Activated CD4-positive, alpha-beta memory T cell treated with anti-CD3 and anti-CD28 coated beads for 36 hours (primary cell): ENCODE measurements at regions of chr19 and their contacts with region 1.

Region 1: DNA sequence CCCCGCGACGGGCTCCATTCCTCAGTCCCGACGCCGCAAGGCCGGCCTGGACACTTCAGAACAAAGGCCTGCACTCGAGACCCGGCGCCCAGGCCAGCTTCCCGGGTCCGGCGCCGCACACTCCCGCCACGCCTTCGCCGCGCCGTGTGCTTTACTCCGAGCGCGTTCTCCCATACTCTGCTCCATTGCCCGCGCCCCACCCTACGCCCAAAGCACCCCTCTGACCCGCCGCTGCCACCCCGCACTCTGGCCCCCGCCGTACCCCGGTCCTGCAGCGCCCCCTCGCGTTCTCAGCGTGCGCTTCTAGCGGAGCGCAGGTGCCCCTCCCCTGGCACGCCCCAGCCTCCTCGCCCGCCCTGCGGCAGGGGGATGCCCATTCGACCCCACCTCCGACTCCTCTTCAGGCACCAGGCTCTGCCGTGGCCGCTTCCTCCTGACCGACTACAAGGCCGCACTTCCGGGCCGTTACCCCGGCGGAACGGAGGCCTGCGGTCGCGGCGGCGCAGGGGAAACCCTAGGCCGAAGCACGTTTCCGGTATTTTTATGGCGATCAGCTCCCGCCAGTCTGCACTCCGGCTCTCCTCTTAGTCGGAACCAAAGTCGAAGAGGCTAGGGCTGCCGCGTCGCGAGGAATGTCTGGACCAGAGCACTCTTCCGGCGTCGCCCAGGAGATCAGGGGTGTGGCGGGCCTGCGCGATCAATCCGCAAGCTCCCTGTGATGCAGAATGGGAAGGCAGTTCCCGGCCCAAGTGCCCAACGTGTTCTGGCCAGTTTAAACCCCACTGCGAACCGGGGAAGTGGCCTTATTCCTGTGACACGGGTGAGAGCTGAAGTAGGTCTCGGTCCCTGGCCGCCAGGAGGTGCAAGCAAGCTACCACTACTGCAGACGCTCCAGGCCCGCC is at the start of gene ZBTB45:
- DNase-seq: peak; percentile 95
- H3K4me3 Mint-ChIP-seq: peak within 1 kb of the TSS; percentile 88
- H3K27ac Mint-ChIP-seq: peak within 1 kb of the TSS; percentile 88
- H3K4me1 Mint-ChIP-seq: peaks cover 32% of the 10 kb centered on the region
- H3K27me3 Mint-ChIP-seq: no peaks in the 10 kb centered on the region
- total RNA-seq, gene ZBTB45: 9.9 to 10.0 TPM

Region 2: DNA sequence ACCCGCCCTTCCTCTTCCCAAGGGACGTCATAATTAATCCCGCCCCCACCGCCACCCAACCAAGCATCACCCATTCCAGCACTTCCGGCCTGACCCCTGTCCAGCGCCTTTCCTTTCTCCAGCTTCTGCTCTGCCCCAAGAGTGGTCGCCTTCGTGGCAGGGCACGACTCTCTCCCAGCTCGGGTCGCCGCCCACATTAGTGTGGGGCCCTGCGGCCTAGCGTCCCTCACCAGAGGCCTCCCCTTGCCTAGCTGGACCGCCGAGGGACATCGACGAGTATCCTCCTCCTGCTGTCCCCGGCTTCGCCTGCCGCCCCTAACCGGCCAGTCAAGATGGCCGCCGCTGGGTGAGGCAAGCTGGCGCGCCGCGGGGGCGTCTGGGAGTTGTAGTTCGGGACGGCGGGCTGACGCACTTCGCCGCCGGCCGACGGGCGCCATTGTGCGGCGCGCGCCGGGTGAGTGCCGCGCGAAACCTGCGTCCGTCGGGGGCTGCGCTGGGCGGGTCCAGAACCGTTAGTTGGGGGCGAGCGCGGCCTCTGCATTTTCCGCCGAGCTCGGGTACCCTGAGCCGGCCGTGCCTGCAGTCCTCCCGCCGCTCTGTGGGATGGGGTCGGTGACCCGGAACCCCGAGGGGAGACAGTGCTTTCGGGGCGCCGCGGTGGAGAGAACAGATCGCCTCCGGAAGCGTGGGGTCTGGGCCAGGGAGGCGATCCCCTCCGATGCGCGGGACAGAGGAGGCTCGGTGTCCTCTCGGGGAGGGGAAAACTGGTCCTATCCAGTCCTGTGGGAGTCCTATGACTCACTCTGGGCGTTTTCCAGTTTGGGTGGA is 336.4 kb before region 1 on chr19 and contains the start of gene ZNF274:
- CTCF ChIA-PET with region 1: no interaction called
- POLR2A ChIA-PET with region 1: no interaction called
- intact Hi-C with region 1: loop called (anchors 2 kb)
- DNase-seq: peak; percentile 95
- H3K4me3 Mint-ChIP-seq: peak within 1 kb of the TSS; percentile 92
- H3K27ac Mint-ChIP-seq: peak within 1 kb of the TSS; percentile 99
- H3K4me1 Mint-ChIP-seq: peaks cover 16% of the 10 kb centered on the region
- H3K27me3 Mint-ChIP-seq: no peaks in the 10 kb centered on the region
- total RNA-seq, gene ZNF274: 19.1 to 19.6 TPM

Region 3: DNA sequence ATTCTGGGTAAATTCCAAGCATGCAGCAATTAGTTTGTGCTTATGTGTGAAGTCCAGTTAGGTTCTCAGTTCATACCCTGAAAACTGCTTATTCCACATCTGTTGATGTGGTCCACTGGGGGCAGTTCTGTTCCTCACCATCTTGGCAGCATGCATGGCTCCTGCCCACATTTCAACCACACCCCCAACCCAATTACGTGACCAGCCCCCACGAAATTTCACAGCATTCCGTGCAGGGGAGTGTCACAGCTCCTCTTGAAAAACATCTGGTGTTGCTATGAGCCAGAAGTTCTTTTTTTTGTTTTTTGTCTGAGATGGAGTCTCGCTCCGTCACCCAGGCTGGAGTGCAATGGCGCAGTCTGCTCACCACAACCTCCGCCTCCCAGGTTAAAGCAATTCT is 223.5 kb before region 1 on chr19:
- CTCF ChIA-PET with region 1: no interaction called
- POLR2A ChIA-PET with region 1: no interaction called
- intact Hi-C with region 1: no loop called
- DNase-seq: no peak
- H3K4me3 Mint-ChIP-seq: no peak overlapping the region
- H3K27ac Mint-ChIP-seq: no peak overlapping the region
- H3K4me1 Mint-ChIP-seq: no peaks in the 10 kb centered on the region
- H3K27me3 Mint-ChIP-seq: no peaks in the 10 kb centered on the region

Region 4: GRCh38 chr19:58326914-58327726 is 192.5 kb before region 1 on chr19 and contains the start of gene ZSCAN22:
- CTCF ChIA-PET with region 1: interaction called, 11 read pairs
- POLR2A ChIA-PET with region 1: no interaction called
- intact Hi-C with region 1: loop called (anchors 1 kb)
- DNase-seq: peak; percentile 95
- H3K4me3 Mint-ChIP-seq: no peak within 1 kb of the TSS
- H3K27ac Mint-ChIP-seq: no peak within 1 kb of the TSS
- H3K4me1 Mint-ChIP-seq: peaks cover 4% of the 10 kb centered on the region
- H3K27me3 Mint-ChIP-seq: no peaks in the 10 kb centered on the region
- total RNA-seq, gene ZSCAN22: 3.1 to 3.3 TPM

Region 5: DNA sequence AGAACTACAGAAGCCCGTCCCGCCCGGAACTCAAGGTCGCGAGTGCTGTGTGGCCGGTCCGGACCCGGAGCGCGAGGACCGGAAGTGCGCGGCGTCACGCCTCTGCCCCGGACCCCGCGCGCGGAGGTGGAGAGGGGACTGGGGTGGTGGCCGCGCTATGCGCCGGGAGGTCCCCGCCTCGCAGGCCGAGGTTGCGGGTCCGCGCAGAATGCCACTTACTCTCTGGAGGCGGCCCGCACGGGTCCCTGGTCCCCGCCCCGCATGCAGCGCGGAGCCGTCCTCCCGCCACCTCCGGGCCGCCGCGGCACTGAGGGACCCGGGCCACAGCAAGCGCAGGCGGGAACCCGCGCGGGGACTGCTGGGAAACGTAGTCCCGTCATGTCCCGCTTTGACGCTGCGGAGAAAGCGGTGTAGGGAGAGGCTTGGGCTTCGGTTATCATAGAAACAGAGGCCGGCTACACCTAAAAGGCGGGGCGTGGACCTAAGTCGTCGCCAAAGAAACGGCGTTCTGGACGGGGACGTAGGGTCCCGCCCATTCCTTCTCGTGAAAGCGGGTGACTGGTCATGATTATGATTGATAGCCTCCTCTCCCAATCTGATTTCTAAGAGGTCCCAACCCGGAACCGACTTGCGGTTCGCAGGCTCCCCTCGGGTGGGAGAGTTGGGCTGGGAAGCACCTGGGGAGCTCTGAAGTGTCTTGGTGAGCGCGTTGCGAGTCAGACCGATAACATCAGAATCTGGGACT is 138.7 kb before region 1 on chr19 and contains the start of gene ZNF837:
- CTCF ChIA-PET with region 1: interaction called, 4 read pairs
- POLR2A ChIA-PET with region 1: interaction called, 4 read pairs
- intact Hi-C with region 1: loop called (anchors 1 kb)
- DNase-seq: peak; percentile 99
- H3K4me3 Mint-ChIP-seq: peak within 1 kb of the TSS; percentile 84
- H3K27ac Mint-ChIP-seq: peak within 1 kb of the TSS; percentile 92
- H3K4me1 Mint-ChIP-seq: peaks cover 25% of the 10 kb centered on the region
- H3K27me3 Mint-ChIP-seq: no peaks in the 10 kb centered on the region
- total RNA-seq, gene ZNF837: 2.1 to 2.4 TPM

Region 6: DNA sequence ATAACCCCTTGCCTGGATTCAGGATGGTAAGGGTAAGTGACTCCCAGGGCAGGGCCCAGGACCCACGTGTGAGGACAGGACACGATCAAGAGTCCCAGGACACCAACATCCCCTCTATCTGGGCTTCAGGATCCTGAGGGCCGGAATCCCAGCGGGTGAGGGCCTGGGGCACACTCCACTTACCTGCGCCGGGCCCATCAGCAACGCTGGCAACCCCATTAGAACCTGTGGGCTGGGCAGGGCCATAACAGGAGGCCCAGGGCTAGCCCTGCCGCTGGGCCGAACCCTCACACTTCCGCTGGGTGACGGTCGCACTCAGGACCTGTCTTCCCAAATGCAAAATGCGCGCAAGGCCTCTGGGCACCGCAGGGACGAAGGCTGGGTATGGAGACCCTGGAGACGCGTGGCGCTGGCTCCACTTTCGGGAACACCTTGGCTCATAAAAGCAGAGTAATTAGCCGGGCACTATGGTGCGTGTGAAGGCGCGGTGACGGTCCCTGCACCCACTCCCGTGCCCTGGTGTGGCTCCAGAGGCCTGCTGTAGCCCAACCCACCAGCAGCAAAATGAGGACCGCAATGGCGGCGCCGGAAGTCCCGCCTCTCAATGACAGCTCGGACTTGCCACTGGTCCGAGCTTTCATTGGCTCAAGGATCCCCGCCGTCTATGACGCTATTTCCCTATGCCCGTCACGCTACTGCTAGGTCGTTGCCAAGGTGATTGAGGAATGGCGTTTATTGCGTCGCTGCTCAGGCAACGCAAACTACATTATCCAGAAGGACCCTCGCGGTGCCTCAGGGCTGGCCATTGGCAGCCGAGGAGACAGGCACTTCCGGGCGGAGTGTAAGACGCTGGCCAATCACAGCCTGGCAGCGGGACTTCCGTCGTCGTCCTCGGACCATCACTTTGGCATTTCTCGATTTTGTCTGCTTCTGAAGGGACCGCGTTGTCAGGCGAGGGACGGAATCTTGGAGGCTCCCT is 79.7 kb before region 1 on chr19 and contains the start of gene ZNF132:
- CTCF ChIA-PET with region 1: no interaction called
- POLR2A ChIA-PET with region 1: no interaction called
- intact Hi-C with region 1: no loop called
- DNase-seq: peak; percentile 97
- H3K4me3 Mint-ChIP-seq: peak within 1 kb of the TSS; percentile 84
- H3K27ac Mint-ChIP-seq: peak within 1 kb of the TSS; percentile 71
- H3K4me1 Mint-ChIP-seq: peaks cover 25% of the 10 kb centered on the region
- H3K27me3 Mint-ChIP-seq: no peaks in the 10 kb centered on the region
- total RNA-seq, gene ZNF132: 3.1 to 3.6 TPM

Region 7: GRCh38 chr19:58492265-58492664 is 27.3 kb before region 1 on chr19:
- CTCF ChIA-PET with region 1: interaction called, 9 read pairs
- POLR2A ChIA-PET with region 1: interaction called, 13 read pairs
- intact Hi-C with region 1: no loop called
- DNase-seq: no peak
- H3K4me3 Mint-ChIP-seq: no peak overlapping the region
- H3K27ac Mint-ChIP-seq: no peak overlapping the region
- H3K4me1 Mint-ChIP-seq: peaks cover 30% of the 10 kb centered on the region
- H3K27me3 Mint-ChIP-seq: no peaks in the 10 kb centered on the region

Region 8: DNA sequence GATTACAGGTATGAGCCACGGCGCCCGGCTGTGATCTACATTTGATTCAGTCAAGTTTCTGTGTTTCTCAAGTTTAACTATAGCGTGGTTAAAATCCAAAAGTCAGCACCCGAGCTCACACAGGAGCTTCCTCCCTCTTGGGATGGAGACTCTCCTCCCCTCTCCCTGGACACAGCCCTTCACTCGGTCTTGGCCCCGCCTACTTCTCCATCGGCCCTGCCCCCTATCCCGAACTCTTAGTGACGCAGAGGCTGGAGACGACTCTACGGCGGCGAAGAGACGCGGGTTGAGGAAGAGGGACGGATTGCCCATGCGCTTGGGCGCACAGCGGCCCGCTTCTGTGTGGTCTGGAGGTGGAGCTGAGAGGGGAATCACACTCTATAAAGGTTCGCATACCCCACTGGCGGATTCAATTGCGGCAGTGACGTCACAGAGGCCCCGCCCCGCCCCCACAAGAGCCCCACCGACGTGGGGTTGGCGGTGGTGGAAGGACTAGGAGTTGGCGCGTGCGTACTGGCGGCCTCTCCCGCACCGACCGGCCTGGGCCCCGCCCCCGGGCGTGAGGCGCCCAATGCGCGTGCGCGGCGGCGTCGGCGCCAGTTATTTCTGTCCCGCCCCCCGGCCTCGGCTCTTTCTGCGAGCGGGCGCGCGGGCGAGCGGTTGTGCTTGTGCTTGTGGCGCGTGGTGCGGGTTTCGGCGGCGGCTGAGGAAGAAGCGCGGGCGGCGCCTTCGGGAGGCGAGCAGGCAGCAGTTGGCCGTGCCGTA is 24.4 kb after region 1 on chr19 and contains the start of gene TRIM28:
- CTCF ChIA-PET with region 1: interaction called, 61 read pairs
- POLR2A ChIA-PET with region 1: interaction called, 35 read pairs
- intact Hi-C with region 1: loop called (anchors 1 kb)
- DNase-seq: peak; percentile 100
- H3K4me3 Mint-ChIP-seq: peak within 1 kb of the TSS; percentile 97
- H3K27ac Mint-ChIP-seq: peak within 1 kb of the TSS; percentile 95
- H3K4me1 Mint-ChIP-seq: peaks cover 32% of the 10 kb centered on the region
- H3K27me3 Mint-ChIP-seq: peaks cover 7% of the 10 kb centered on the region
- total RNA-seq, gene TRIM28: 404 to 408 TPM

Region 9: GRCh38 chr19:58572818-58573657 is 53.4 kb after region 1 on chr19 and contains the start of gene MZF1:
- CTCF ChIA-PET with region 1: interaction called, 65 read pairs
- POLR2A ChIA-PET with region 1: interaction called, 16 read pairs
- intact Hi-C with region 1: loop called (anchors 1 kb)
- DNase-seq: peak; percentile 100
- H3K4me3 Mint-ChIP-seq: peak within 1 kb of the TSS; percentile 96
- H3K27ac Mint-ChIP-seq: peak within 1 kb of the TSS; percentile 100
- H3K4me1 Mint-ChIP-seq: peaks cover 33% of the 10 kb centered on the region
- H3K27me3 Mint-ChIP-seq: no peaks in the 10 kb centered on the region
- total RNA-seq, gene MZF1: 13.3 to 14.4 TPM